B cell (primary cell): ENCODE measurements at regions of chr17 and their contacts with region 1.

Region 1: DNA sequence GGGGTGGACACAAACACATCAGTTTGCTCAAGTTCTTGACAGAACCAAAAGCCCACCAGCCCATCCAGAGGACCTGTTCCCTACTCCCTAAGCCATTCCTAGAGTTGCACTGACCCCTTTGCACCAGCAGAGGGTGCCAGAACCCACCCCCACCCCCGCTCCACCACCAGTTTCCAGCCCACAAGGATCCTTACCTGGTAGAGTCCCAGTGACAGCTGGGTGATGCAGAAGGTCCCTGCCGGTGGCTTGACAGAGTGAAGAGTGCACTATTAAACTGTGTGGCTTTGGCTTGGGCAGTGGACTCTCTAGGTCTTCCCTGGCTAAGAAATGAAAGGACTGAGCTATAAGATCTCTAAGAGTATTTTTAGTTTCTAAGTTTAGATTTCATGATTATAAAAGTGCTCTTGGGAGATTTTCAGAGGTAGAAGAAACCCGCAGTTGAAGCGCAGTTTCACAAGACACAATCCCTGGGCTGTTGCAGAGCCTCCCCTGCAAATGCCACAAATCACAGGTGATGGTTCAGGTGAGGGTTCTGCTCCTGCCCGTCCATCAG is 73.3 kb upstream of the MTMR4 start:
- DNase-seq: peak; percentile 78
- ATAC-seq: peak; percentile 81
- H3K4me3 ChIP-seq: no peak overlapping the region
- H3K4me3 Mint-ChIP-seq: no peak overlapping the region
- H3K27ac ChIP-seq: no peak overlapping the region
- H3K27ac Mint-ChIP-seq: no peak overlapping the region
- H3K4me1 ChIP-seq: peaks cover 0 to 5% of the 10 kb centered on the region in 2 donors
- H3K4me1 Mint-ChIP-seq: peaks cover 3% of the 10 kb centered on the region
- H3K27me3 ChIP-seq: no peaks in the 10 kb centered on the region
- H3K27me3 Mint-ChIP-seq: no peaks in the 10 kb centered on the region
- CTCF ChIP-seq: peak; percentile 91

Region 2: GRCh38 chr17:58577642-58578091 is 10.1 kb before region 1 on chr17:
- CTCF ChIA-PET with region 1: interaction called, 60 read pairs
- POLR2A ChIA-PET with region 1: no interaction called
- intact Hi-C with region 1: no loop called
- DNase-seq: peak; percentile 66
- ATAC-seq: no peak
- H3K4me3 ChIP-seq: no peak overlapping the region
- H3K4me3 Mint-ChIP-seq: no peak overlapping the region
- H3K27ac ChIP-seq: no peak overlapping the region
- H3K27ac Mint-ChIP-seq: no peak overlapping the region
- H3K4me1 ChIP-seq: no peaks in the 10 kb centered on the region
- H3K4me1 Mint-ChIP-seq: no peaks in the 10 kb centered on the region
- H3K27me3 ChIP-seq: no peaks in the 10 kb centered on the region
- H3K27me3 Mint-ChIP-seq: no peaks in the 10 kb centered on the region
- CTCF ChIP-seq: peak; percentile 75

Region 3: DNA sequence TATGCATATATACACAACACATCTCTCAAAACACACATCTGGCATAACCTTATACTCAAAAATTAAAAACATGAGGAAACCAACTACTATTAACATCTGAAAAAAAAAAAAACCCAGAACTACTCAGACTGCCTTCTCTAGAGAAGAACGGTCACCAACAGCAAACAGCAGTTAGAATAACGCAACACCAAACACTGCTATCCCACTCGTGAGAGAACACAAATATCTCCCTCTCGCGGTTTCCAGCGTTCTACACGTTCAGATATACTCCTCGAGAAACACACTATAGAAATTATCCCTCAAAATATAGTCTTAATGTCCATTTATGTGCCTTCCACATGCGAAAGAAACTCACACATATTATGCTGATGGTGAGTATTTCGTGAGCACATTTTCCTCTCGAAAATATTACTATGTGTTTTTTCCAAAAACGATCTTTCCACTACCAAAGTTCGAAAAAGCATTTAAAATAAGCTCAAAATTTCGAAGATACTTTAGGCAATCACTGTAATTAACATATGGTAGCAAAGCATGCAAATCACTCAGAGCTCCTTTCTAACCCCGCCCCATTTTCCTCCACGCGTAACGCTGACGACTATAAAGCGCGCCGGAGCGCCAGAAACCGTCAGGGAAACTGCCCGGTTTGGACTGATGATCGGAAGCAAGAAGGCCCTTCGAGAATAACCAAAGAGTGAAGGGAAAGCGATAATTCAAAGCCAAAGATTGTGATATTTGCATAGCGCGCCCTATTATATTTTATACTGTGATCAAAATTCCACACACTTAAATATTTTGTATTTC is 43.9 kb after region 1 on chr17:
- CTCF ChIA-PET with region 1: interaction called, 7 read pairs
- POLR2A ChIA-PET with region 1: no interaction called
- intact Hi-C with region 1: loop called (anchors 1 kb)
- DNase-seq: peak; percentile 97
- ATAC-seq: peak; percentile 82
- H3K4me3 ChIP-seq: peak overlapping the region; percentile 28 to 84 (median 57)
- H3K4me3 Mint-ChIP-seq: no peak overlapping the region
- H3K27ac ChIP-seq: peak overlapping the region; percentile 81 to 99
- H3K27ac Mint-ChIP-seq: no peak overlapping the region
- H3K4me1 ChIP-seq: peaks cover 9% of the 10 kb centered on the region in 2 donors
- H3K4me1 Mint-ChIP-seq: peaks cover 12% of the 10 kb centered on the region
- H3K27me3 ChIP-seq: no peaks in the 10 kb centered on the region
- H3K27me3 Mint-ChIP-seq: no peaks in the 10 kb centered on the region
- CTCF ChIP-seq: peak; percentile 43

Region 4: GRCh38 chr17:58658804-58659713 is 71.3 kb after region 1 on chr17:
- CTCF ChIA-PET with region 1: no interaction called
- POLR2A ChIA-PET with region 1: no interaction called
- intact Hi-C with region 1: loop called (anchors 2 kb)
- DNase-seq: peak; percentile 95
- ATAC-seq: peak; percentile 78
- H3K4me3 ChIP-seq: peak overlapping the region; percentile 44 to 82 (median 54)
- H3K4me3 Mint-ChIP-seq: peak overlapping the region; percentile 92
- H3K27ac ChIP-seq: peak overlapping the region; percentile 91 to 97
- H3K27ac Mint-ChIP-seq: peak overlapping the region; percentile 99
- H3K4me1 ChIP-seq: peaks cover 0 to 13% of the 10 kb centered on the region in 2 donors
- H3K4me1 Mint-ChIP-seq: peaks cover 15% of the 10 kb centered on the region
- H3K27me3 ChIP-seq: no peaks in the 10 kb centered on the region
- H3K27me3 Mint-ChIP-seq: no peaks in the 10 kb centered on the region
- CTCF ChIP-seq: no peak

Region 5: GRCh38 chr17:58692239-58693055 is 104.7 kb after region 1 on chr17 and contains the start of gene RAD51C:
- CTCF ChIA-PET with region 1: interaction called, 7 read pairs
- POLR2A ChIA-PET with region 1: no interaction called
- intact Hi-C with region 1: loop called (anchors 10 kb)
- DNase-seq: peak; percentile 92
- ATAC-seq: peak; percentile 99
- H3K4me3 ChIP-seq: peak within 1 kb of the TSS; percentile 64 to 88 (median 81)
- H3K4me3 Mint-ChIP-seq: peak within 1 kb of the TSS; percentile 90
- H3K27ac ChIP-seq: peak within 1 kb of the TSS; percentile 66 to 70
- H3K27ac Mint-ChIP-seq: peak within 1 kb of the TSS; percentile 95
- H3K4me1 ChIP-seq: peaks cover 14 to 17% of the 10 kb centered on the region in 2 donors
- H3K4me1 Mint-ChIP-seq: peaks cover 24% of the 10 kb centered on the region
- H3K27me3 ChIP-seq: no peaks in the 10 kb centered on the region
- H3K27me3 Mint-ChIP-seq: no peaks in the 10 kb centered on the region
- CTCF ChIP-seq: no peak
- total RNA-seq, gene RAD51C: 33.2 and 35.0 TPM in 2 replicates

Region 6: GRCh38 chr17:58710936-58711775 is 123.4 kb after region 1 on chr17:
- CTCF ChIA-PET with region 1: no interaction called
- POLR2A ChIA-PET with region 1: no interaction called
- intact Hi-C with region 1: loop called (anchors 2 kb)
- DNase-seq: peak; percentile 71
- ATAC-seq: no peak
- H3K4me3 ChIP-seq: no peak overlapping the region
- H3K4me3 Mint-ChIP-seq: no peak overlapping the region
- H3K27ac ChIP-seq: no peak overlapping the region
- H3K27ac Mint-ChIP-seq: no peak overlapping the region
- H3K4me1 ChIP-seq: no peaks in the 10 kb centered on the region
- H3K4me1 Mint-ChIP-seq: peaks cover 6% of the 10 kb centered on the region
- H3K27me3 ChIP-seq: no peaks in the 10 kb centered on the region
- H3K27me3 Mint-ChIP-seq: no peaks in the 10 kb centered on the region
- CTCF ChIP-seq: peak; percentile 93

Region 7: DNA sequence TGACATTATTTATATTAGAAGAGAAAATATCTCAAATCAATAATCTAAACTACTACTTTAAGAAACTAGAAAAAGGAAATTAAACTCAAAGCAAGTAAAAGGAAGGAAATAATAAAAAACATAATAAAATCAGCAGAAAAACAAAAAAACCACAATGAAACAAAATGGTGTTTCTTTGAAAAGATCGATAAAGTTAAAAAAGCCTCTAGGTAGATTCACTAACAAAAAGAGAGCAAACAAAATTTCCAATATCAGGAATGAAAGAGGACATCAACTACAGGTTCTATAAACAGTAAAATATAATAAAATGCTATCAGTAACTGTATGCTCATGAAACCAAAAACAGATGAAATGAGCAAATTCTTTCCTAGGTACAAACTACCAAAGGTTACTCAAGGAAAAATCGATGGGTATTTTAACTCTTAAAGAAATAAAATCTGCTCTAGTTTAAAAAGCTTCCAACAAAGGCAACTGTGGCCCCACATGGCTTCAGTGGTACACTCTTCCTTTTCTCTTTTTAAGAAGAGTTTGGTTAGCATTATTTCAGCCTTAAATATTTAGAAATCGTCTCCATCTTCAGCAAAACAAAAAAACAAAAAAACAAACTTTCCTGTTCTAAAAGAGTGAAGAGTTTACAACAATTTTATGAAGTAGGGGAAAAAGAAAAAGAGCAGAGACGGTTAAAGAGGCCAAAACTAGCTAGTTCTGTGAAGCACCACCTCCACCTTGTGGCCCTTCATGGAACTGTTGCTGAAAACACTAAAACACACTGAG is 416.7 kb after region 1 on chr17:
- CTCF ChIA-PET with region 1: interaction called, 102 read pairs
- POLR2A ChIA-PET with region 1: interaction called, 5 read pairs
- intact Hi-C with region 1: loop called (anchors 1 kb)
- DNase-seq: peak; percentile 81
- ATAC-seq: peak; percentile 37
- H3K4me3 ChIP-seq: no peak overlapping the region
- H3K4me3 Mint-ChIP-seq: peak overlapping the region; percentile 7
- H3K27ac ChIP-seq: peak overlapping the region in 1 of 2 donors; percentile 52
- H3K27ac Mint-ChIP-seq: peak overlapping the region; percentile 72
- H3K4me1 ChIP-seq: peaks cover 16 to 22% of the 10 kb centered on the region in 2 donors
- H3K4me1 Mint-ChIP-seq: peaks cover 28% of the 10 kb centered on the region
- H3K27me3 ChIP-seq: no peaks in the 10 kb centered on the region
- H3K27me3 Mint-ChIP-seq: no peaks in the 10 kb centered on the region
- CTCF ChIP-seq: peak; percentile 99